CD4-positive, alpha-beta T cell (primary cell): ENCODE measurements at regions of chr6 and their contacts with region 1.

Region 1: DNA sequence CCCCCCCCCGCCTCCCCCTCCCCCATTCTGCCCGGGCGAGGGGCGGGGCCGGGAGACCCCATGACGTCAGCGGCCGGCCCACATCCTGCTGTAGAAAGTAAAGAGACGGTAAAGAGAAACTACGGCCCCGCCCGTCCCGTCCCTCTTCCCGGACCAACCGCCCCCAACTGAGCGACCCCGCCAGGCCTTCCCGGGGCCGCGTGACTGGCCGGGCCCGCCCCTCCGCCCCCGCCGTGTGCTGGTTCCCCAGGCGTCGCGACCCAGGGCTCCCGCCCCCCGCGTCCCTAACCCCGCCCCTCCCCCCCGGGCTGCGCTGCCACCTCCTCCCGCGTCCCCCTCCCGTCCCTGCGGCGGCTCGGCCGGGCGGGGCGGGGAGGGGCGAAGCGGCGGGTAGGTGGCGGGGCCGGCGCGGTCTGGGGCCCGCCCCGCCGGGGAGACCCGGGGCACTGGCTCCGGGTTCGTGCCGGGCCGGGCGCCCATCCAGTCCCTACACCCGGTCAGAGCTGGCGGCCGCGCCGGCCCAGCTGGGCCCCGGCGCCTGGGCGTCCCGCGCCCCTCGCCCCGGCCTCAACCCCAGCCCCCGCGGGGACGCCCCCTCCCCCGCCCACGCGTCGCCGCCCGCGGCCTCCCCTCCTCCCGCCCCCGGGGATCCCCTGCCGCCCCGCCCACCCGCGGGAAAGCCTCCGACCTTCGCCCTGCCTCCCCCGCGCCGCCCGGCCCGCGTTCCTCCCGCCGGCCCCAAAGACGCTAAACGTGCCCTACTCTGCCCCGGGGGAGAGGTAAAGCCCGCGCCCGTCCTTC is 636 bp upstream of the HIVEP1 start:
- DNase-seq: peak; percentile 93 to 99 (median 96)
- ATAC-seq: peak; percentile 67
- H3K4me3 ChIP-seq: peak overlapping the region; percentile 85
- H3K4me3 Mint-ChIP-seq: peak overlapping the region; percentile 92
- H3K27ac ChIP-seq: no peak overlapping the region
- H3K27ac Mint-ChIP-seq: peak overlapping the region; percentile 98
- H3K4me1 ChIP-seq: peaks cover 28% of the 10 kb centered on the region
- H3K4me1 Mint-ChIP-seq: peaks cover 63% of the 10 kb centered on the region
- H3K27me3 ChIP-seq: no peaks in the 10 kb centered on the region
- H3K27me3 Mint-ChIP-seq: peaks cover 5% of the 10 kb centered on the region
- CTCF ChIP-seq: no peak

Region 2: GRCh38 chr6:11537229-11538051 is 474.0 kb before region 1 on chr6 and contains the start of gene TMEM170B:
- CTCF ChIA-PET with region 1: no interaction called
- POLR2A ChIA-PET with region 1: no interaction called
- intact Hi-C with region 1: loop called in 1 of 2 experiments (anchors 10 kb)
- DNase-seq: peak; percentile 94 to 99 (median 97)
- ATAC-seq: peak; percentile 92
- H3K4me3 ChIP-seq: peak within 1 kb of the TSS; percentile 73
- H3K4me3 Mint-ChIP-seq: peak within 1 kb of the TSS; percentile 93
- H3K27ac ChIP-seq: peak within 1 kb of the TSS in 1 of 2 donors; percentile 47
- H3K27ac Mint-ChIP-seq: peak within 1 kb of the TSS; percentile 84
- H3K4me1 ChIP-seq: peaks cover 14% of the 10 kb centered on the region
- H3K4me1 Mint-ChIP-seq: peaks cover 28% of the 10 kb centered on the region
- H3K27me3 ChIP-seq: no peaks in the 10 kb centered on the region
- H3K27me3 Mint-ChIP-seq: peaks cover 6% of the 10 kb centered on the region
- CTCF ChIP-seq: no peak
- total RNA-seq, gene TMEM170B: 1.9 to 2.1 TPM

Region 3: DNA sequence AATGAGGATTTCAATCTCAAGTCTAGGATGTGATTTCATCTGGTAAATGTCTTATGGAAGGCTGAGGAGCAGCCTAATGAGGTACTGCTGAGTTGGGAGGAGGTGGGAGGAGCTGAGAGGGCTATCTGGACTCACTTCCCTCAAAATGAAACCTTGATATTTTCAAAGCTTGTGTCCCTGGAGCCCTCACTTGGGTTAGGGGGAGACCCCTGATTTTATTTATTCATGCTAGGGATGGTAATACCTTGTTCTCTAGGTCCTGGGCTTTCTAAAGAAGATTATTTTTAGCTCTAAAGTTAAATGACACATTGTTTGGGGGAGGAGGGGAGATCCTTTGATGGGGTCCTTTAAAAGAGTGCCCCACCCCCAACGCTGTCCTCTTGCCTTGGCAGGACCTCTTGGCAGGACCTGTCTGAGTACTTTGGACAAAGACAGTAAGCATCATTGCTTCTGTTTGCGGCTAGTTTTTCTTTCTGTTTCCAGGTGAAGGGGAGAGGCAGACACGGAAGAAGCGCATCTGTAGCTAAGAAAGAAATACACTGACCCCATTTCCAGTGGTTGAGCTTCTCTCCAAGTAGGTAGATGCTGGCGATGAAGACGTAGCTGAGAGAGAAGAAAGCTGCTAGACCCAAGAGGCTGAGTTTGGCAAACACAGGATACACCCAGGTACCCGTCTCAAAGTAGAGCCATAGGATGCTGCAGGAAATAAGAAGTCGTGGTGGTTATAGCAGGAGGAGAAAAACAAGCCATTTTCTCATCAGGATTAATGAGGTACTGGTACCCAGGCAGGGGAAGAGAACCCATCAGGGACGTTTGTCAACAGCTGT is 288.5 kb before region 1 on chr6:
- CTCF ChIA-PET with region 1: no interaction called
- POLR2A ChIA-PET with region 1: interaction called, 10 read pairs
- intact Hi-C with region 1: no loop called
- DNase-seq: peak in 2 of 14 experiments; percentile 32 to 44
- ATAC-seq: peak; percentile 45
- H3K4me3 ChIP-seq: no peak overlapping the region
- H3K4me3 Mint-ChIP-seq: peak overlapping the region; percentile 14
- H3K27ac ChIP-seq: peak overlapping the region in 1 of 2 donors; percentile 18
- H3K27ac Mint-ChIP-seq: peak overlapping the region; percentile 58
- H3K4me1 ChIP-seq: peaks cover 33% of the 10 kb centered on the region
- H3K4me1 Mint-ChIP-seq: peaks cover 53% of the 10 kb centered on the region
- H3K27me3 ChIP-seq: no peaks in the 10 kb centered on the region
- H3K27me3 Mint-ChIP-seq: no peaks in the 10 kb centered on the region
- CTCF ChIP-seq: no peak

Region 4: DNA sequence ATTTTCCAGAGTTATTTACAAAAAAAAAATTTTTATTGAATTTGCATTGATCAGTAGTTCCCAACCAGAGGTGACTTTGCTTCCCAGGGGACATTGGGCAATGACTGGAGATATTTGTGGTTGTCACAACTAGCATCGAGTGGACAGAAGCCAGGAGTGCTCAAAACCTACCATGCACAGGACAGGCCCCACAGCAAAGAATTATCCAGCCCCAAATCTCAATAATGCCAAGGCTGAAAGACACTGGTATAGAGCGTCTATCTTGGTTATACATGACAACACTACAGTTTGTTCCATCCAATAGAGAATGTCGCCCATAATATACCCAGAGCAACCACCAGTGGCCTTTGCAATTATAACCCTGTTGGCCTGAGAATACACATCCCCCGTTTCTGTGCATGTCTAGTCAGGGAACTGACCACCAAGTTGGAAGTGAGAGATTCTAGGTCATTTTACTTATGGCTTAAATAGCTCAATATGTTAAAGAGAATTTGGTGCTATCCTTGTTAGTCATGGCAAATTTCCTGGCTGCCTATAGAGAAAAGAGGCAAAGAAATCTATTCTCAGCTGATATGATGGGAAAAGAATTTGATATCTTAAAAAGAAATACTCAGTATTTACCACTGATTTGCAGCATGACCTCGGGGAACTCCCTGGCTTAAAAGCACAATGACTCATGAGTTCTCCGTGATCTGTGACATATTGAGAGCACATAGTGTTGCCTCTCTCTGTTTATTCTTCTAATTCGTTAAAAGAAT is 156.9 kb before region 1 on chr6:
- CTCF ChIA-PET with region 1: no interaction called
- POLR2A ChIA-PET with region 1: no interaction called
- intact Hi-C with region 1: no loop called
- DNase-seq: peak in 2 of 14 experiments; percentile 23 to 27
- ATAC-seq: no peak
- H3K4me3 ChIP-seq: no peak overlapping the region
- H3K4me3 Mint-ChIP-seq: no peak overlapping the region
- H3K27ac ChIP-seq: no peak overlapping the region
- H3K27ac Mint-ChIP-seq: no peak overlapping the region
- H3K4me1 ChIP-seq: no peaks in the 10 kb centered on the region
- H3K4me1 Mint-ChIP-seq: no peaks in the 10 kb centered on the region
- H3K27me3 ChIP-seq: no peaks in the 10 kb centered on the region
- H3K27me3 Mint-ChIP-seq: no peaks in the 10 kb centered on the region
- CTCF ChIP-seq: no peak

Region 5: GRCh38 chr6:11900662-11901598 is 110.5 kb before region 1 on chr6:
- CTCF ChIA-PET with region 1: no interaction called
- POLR2A ChIA-PET with region 1: interaction called, 5 read pairs
- intact Hi-C with region 1: loop called in 1 of 2 experiments (anchors 2 kb)
- DNase-seq: peak in 4 of 14 experiments; percentile 15 to 43 (median 23)
- ATAC-seq: peak; percentile 70
- H3K4me3 ChIP-seq: no peak overlapping the region
- H3K4me3 Mint-ChIP-seq: peak overlapping the region; percentile 73
- H3K27ac ChIP-seq: no peak overlapping the region
- H3K27ac Mint-ChIP-seq: peak overlapping the region; percentile 50
- H3K4me1 ChIP-seq: no peaks in the 10 kb centered on the region
- H3K4me1 Mint-ChIP-seq: peaks cover 23% of the 10 kb centered on the region
- H3K27me3 ChIP-seq: no peaks in the 10 kb centered on the region
- H3K27me3 Mint-ChIP-seq: no peaks in the 10 kb centered on the region
- CTCF ChIP-seq: no peak

Region 6: GRCh38 chr6:12060780-12061619 is 49.5 kb after region 1 on chr6:
- CTCF ChIA-PET with region 1: no interaction called
- POLR2A ChIA-PET with region 1: interaction called, 3 read pairs
- intact Hi-C with region 1: loop called in 1 of 2 experiments (anchors 2 kb)
- DNase-seq: peak; percentile 35 to 93 (median 70)
- ATAC-seq: peak; percentile 97
- H3K4me3 ChIP-seq: peak overlapping the region; percentile 41
- H3K4me3 Mint-ChIP-seq: peak overlapping the region; percentile 89
- H3K27ac ChIP-seq: no peak overlapping the region
- H3K27ac Mint-ChIP-seq: peak overlapping the region; percentile 77
- H3K4me1 ChIP-seq: peaks cover 10% of the 10 kb centered on the region
- H3K4me1 Mint-ChIP-seq: peaks cover 72% of the 10 kb centered on the region
- H3K27me3 ChIP-seq: no peaks in the 10 kb centered on the region
- H3K27me3 Mint-ChIP-seq: no peaks in the 10 kb centered on the region
- CTCF ChIP-seq: no peak

Region 7: GRCh38 chr6:13814176-13814937 is 1802.9 kb after region 1 on chr6 and contains the start of gene MCUR1:
- CTCF ChIA-PET with region 1: no interaction called
- POLR2A ChIA-PET with region 1: no interaction called
- intact Hi-C with region 1: loop called in 1 of 2 experiments (anchors 10 kb)
- DNase-seq: peak; percentile 54 to 94 (median 73)
- ATAC-seq: peak; percentile 83
- H3K4me3 ChIP-seq: peak within 1 kb of the TSS; percentile 70
- H3K4me3 Mint-ChIP-seq: peak within 1 kb of the TSS; percentile 90
- H3K27ac ChIP-seq: peak within 1 kb of the TSS; percentile 72 to 80
- H3K27ac Mint-ChIP-seq: peak within 1 kb of the TSS; percentile 86
- H3K4me1 ChIP-seq: peaks cover 18% of the 10 kb centered on the region
- H3K4me1 Mint-ChIP-seq: peaks cover 37% of the 10 kb centered on the region
- H3K27me3 ChIP-seq: no peaks in the 10 kb centered on the region
- H3K27me3 Mint-ChIP-seq: no peaks in the 10 kb centered on the region
- CTCF ChIP-seq: peak; percentile 20
- total RNA-seq, gene MCUR1: 3.2 to 4.5 TPM